Activated CD4-positive, alpha-beta memory T cell treated with anti-CD3 and anti-CD28 coated beads, Interleukin-2, amount 10 ng/mL, durations not matched to agents 7 days and 5 days (primary cell): ENCODE measurements at regions of chr16 and their contacts with region 1.

Region 1: GRCh38 chr16:56783298-56783697 is 53.4 kb downstream of the NUP93 start:
- DNase-seq: no peak
- H3K4me3 Mint-ChIP-seq: no peak overlapping the region
- H3K27ac Mint-ChIP-seq: no peak overlapping the region
- H3K4me1 Mint-ChIP-seq: peaks cover 32% of the 10 kb centered on the region
- H3K27me3 Mint-ChIP-seq: no peaks in the 10 kb centered on the region

Region 2: DNA sequence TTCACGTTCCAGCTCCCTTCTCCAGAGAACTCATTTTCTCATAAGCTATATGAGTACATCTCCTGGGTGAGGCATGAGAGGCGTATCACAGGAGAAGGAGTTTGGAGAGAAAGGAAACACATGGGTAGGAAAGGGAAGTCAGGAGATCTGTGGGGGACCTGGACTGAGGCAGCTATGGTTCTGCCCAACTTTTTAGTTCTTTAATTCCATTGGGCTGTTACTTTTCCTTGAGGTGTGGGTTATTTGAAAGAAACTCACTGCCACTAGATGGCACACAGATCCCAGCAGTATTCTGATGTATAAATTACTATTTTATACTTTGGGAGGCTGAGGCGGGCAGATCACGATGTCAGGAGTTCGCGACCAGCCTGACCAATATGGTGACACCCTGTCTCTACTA is 10.2 kb after region 1 on chr16:
- CTCF ChIA-PET with region 1: interaction called, 10 read pairs
- POLR2A ChIA-PET with region 1: interaction called, 3 read pairs
- DNase-seq: peak; percentile 27
- H3K4me3 Mint-ChIP-seq: no peak overlapping the region
- H3K27ac Mint-ChIP-seq: no peak overlapping the region
- H3K4me1 Mint-ChIP-seq: no peaks in the 10 kb centered on the region
- H3K27me3 Mint-ChIP-seq: no peaks in the 10 kb centered on the region

Region 3: DNA sequence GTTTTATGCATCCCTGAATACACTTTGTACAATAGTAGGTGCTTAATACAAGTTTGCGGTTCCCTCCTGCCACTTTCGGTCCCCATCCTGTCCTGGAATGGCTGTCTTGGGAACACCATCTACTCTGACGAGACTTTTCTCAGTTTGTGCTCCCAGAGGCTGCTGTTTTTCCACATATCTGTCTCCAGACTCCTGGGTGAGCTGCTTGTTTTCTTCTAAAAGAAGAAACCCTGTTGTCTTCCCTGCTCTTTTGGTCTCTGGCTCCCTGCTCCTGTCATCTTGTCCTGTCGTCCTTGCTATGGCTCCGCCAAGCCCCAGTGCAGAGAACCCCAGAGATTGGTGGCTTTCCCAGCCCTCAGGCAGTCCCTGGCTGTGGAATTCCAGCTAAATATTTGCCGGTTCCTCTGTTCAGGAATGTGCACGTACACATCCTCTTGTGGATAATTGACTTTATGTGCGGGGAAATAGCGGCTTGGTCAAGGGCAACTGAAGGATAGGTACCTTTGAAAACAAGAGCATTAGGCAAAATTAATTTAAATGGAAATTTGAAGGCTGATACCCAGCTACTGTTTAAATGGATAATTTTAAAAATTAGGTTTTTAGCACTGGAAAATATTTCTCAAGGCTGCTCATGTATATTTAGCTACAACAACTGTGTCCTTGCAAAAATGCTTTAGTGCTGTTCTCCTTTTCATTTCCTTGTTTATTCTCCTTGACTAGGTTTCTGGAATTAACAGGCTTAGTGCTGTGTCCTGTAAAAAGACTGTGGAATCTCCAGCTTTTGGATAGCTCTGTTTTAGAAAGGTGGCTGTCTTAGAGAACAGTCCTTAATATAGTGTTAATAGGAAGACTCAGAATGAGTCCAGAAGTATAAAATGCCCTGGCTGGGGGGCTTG is 31.5 kb after region 1 on chr16:
- CTCF ChIA-PET with region 1: no interaction called
- POLR2A ChIA-PET with region 1: no interaction called
- DNase-seq: no peak
- H3K4me3 Mint-ChIP-seq: no peak overlapping the region
- H3K27ac Mint-ChIP-seq: no peak overlapping the region
- H3K4me1 Mint-ChIP-seq: peaks cover 8% of the 10 kb centered on the region
- H3K27me3 Mint-ChIP-seq: no peaks in the 10 kb centered on the region

Region 4: GRCh38 chr16:56841233-56841632 is 57.9 kb after region 1 on chr16:
- CTCF ChIA-PET with region 1: no interaction called
- POLR2A ChIA-PET with region 1: no interaction called
- DNase-seq: no peak
- H3K4me3 Mint-ChIP-seq: no peak overlapping the region
- H3K27ac Mint-ChIP-seq: no peak overlapping the region
- H3K4me1 Mint-ChIP-seq: no peaks in the 10 kb centered on the region
- H3K27me3 Mint-ChIP-seq: no peaks in the 10 kb centered on the region

Region 5: DNA sequence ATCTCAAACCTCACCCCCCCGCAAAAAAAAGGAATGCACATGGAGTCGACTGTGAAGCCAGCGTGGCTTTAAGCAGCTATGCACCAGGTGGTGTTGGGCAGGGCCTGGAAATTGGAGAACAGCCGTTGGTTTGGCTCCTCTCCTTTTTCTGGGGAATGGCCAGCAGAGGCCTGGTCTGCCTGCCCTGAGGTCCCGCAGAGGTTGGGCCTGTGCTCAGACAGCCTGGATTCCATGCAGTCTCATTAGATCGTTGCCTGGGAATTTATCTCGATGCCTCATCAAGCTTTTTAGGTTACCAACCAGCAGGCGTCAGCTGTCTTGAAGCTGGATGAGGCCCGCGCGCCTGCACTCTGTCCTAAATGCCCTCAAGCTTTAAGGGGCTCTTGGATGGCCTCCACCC is 91.5 kb after region 1 on chr16:
- CTCF ChIA-PET with region 1: no interaction called
- POLR2A ChIA-PET with region 1: no interaction called
- DNase-seq: no peak
- H3K4me3 Mint-ChIP-seq: no peak overlapping the region
- H3K27ac Mint-ChIP-seq: no peak overlapping the region
- H3K4me1 Mint-ChIP-seq: peaks cover 6% of the 10 kb centered on the region
- H3K27me3 Mint-ChIP-seq: no peaks in the 10 kb centered on the region